Sigmoid colon (tissue), 7 donors: ENCODE measurements at regions of chr19 and their contacts with region 1.

Region 1: GRCh38 chr19:41310033-41310758 is at the start of gene CCDC97:
- DNase-seq: peak; percentile 92
- H3K4me3 ChIP-seq: peak within 1 kb of the TSS; percentile 61 to 83 (median 68)
- H3K27ac ChIP-seq: peak within 1 kb of the TSS; percentile 88 to 96 (median 95)
- H3K4me1 ChIP-seq: peaks cover 0 to 41% (median 36%) of the 10 kb centered on the region in 4 donors
- H3K27me3 ChIP-seq: no peaks in the 10 kb centered on the region
- CTCF ChIP-seq: no peak
- EP300 ChIP-seq: peak in 2 of 4 donors; percentile 21 to 26
- POLR2A ChIP-seq: peak; percentile 58 to 78
- total RNA-seq, gene CCDC97: 8.7 to 16.6 (median 9.2) TPM

Region 2: GRCh38 chr19:40285353-40286234 is 1024.6 kb before region 1 on chr19:
- intact Hi-C with region 1: loop called (anchors 5 kb)
- DNase-seq: peak; percentile 100
- H3K4me3 ChIP-seq: peak overlapping the region; percentile 91 to 100 (median 98)
- H3K27ac ChIP-seq: peak overlapping the region; percentile 96 to 99 (median 98)
- H3K4me1 ChIP-seq: peaks cover 0 to 47% (median 42%) of the 10 kb centered on the region in 4 donors
- H3K27me3 ChIP-seq: no peaks in the 10 kb centered on the region
- CTCF ChIP-seq: no peak
- EP300 ChIP-seq: peak in 1 of 4 donors; percentile 55
- POLR2A ChIP-seq: no peak

Region 3: DNA sequence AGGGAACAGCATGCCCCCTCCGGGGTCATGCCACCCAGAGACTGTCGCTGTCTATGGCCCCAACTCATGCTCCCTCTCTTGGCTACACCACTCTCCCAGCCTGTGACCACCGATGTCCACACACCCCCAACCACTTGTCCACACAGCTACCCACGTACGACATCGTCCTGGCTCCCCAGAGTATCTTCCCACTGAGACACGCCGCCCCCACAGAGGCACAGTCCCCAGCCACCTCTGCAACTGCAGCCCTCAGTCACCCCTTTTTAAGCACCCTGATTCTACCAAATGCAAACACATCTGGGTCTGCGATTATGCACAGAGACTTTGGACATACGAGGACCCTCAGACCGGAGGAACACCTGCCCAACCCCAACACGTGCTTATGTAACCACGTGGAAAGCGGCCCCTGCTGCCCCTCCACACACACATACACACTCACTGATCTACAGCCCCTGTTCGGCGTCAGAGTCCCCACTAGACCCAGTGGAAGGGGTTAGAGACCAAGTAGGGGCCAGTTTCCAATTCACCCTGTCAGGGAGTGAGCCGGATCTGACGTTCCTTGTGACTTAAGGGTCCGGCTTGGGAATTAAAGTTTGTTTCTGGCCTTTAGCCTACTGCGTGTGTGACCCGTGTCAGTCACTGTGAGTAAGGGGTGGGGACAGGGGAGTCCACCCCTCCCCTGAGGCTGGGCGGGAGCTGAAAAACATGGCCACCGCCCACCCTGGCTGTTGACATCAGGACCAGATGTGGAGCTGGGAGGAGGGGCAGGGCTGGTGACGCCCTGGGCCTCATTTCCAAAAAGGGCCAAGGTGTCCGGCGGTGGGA is 103.1 kb before region 1 on chr19:
- intact Hi-C with region 1: loop called (anchors 1 kb)
- DNase-seq: peak; percentile 90
- H3K4me3 ChIP-seq: peak overlapping the region in 1 of 4 donors; percentile 5
- H3K27ac ChIP-seq: peak overlapping the region; percentile 46 to 59 (median 54)
- H3K4me1 ChIP-seq: peaks cover 0 to 7% (median 0%) of the 10 kb centered on the region in 4 donors
- H3K27me3 ChIP-seq: no peaks in the 10 kb centered on the region
- CTCF ChIP-seq: no peak
- EP300 ChIP-seq: no peak
- POLR2A ChIP-seq: no peak

Region 4: DNA sequence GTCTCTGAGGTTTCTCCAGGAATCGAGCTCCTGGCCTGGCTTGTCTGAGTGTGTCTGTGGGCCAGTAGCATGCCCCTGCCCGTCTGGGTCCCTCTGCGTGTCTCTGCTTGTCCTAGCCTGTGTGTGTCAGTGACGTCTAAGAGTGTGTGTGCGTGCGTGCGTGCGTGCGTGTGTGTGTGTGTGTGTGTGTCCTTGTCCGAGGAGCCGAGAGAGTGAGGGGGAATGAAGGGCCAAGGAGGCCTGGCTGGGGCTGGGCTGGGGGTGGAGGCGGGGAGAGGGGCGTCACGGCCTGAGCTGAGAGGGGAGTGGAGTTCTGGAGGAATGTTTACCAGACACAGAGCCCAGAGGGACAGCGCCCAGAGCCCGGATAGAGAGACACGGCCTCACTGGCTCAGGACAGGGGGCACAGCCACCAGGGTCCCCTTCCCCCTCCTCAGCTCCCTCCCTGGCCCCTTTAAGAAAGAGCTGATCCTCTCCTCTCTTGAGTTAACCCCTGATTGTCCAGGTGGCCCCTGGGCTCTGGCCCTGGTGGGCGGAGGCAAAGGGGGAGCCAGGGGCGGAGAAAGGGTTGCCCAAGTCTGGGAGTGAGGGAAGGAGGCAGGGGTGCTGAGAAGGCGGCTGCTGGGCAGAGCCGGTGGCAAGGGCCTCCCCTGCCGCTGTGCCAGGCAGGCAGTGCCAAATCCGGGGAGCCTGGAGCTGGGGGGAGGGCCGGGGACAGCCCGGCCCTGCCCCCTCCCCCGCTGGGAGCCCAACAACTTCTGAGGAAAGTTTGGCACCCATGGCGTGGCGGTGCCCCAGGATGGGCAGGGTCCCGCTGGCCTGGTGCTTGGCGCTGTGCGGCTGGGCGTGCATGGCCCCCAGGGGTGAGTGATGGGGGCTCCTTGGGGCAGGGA is 91.3 kb before region 1 on chr19 and contains the start of gene AXL:
- intact Hi-C with region 1: loop called (anchors 5 kb)
- DNase-seq: peak; percentile 95
- H3K4me3 ChIP-seq: peak within 1 kb of the TSS; percentile 64 to 86 (median 74)
- H3K27ac ChIP-seq: peak within 1 kb of the TSS; percentile 91 to 98 (median 94)
- H3K4me1 ChIP-seq: peaks cover 0 to 44% (median 40%) of the 10 kb centered on the region in 4 donors
- H3K27me3 ChIP-seq: no peaks in the 10 kb centered on the region
- CTCF ChIP-seq: no peak
- EP300 ChIP-seq: peak in 1 of 4 donors; percentile 69
- POLR2A ChIP-seq: peak; percentile 67 to 70
- total RNA-seq, gene AXL: 85.9 to 108 (median 95.4) TPM

Region 5: DNA sequence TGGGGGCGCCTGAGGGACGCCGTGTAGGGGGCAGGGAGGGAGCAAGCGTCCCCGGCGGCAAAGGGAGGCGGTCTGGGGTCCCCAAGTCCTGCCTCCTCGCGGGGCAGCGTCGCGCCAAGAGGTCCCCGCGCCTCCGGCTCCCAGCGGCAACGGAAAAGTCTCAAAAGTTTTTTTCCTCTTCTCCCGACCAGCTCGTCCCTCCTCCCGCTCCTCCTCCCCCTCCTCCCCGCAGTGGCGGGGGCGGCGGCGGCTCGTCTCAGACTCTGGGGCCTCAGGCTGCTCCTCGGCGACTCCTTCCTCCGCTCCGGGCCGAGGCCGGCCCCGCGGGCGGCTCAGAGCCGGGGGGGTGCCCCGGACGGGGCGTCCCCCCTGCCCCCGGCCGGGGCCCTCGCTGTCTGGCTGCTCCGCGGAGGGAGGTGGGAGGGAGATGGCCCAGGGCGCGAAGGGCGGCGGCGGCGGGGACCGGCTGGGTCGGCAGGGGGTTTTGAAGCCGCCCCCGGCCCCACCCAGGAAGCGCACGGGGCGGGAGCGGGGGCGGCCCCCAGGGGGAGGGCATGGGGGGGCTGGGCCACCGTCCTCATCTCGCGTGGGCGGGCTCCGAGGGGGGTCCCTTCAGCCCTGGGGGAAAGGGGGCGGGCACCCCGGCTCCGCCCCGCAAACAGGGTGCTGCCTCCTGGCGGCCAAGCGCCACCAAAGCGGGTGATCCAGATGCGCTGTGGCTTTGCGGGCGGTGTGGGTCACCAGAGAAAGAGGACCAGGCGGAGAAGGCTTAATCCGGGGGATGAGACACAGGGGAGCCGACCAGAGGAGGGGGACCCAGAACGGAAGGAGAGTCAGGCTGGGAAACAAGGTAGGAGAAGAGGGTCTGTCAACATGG is 43.5 kb after region 1 on chr19 and contains the start of gene TGFB1:
- intact Hi-C with region 1: loop called (anchors 5 kb)
- DNase-seq: peak; percentile 96
- H3K4me3 ChIP-seq: peak within 1 kb of the TSS; percentile 74 to 85 (median 77)
- H3K27ac ChIP-seq: peak within 1 kb of the TSS; percentile 87 to 95 (median 94)
- H3K4me1 ChIP-seq: peaks cover 0 to 34% (median 24%) of the 10 kb centered on the region in 4 donors
- H3K27me3 ChIP-seq: no peaks in the 10 kb centered on the region
- CTCF ChIP-seq: peak; percentile 85 to 88 (median 86)
- EP300 ChIP-seq: no peak
- POLR2A ChIP-seq: no peak
- total RNA-seq, gene TGFB1: 16.4 to 27.1 (median 18.1) TPM